CD4-positive, alpha-beta memory T cell (primary cell): ENCODE measurements at regions of chr7 and their contacts with region 1.

Region 1: GRCh38 chr7:50782384-50783208 is at the start of gene GRB10:
- DNase-seq: peak in 1 of 5 donors; percentile 23
- H3K4me3 ChIP-seq: no peak within 1 kb of the TSS
- H3K4me3 Mint-ChIP-seq: peak within 1 kb of the TSS; percentile 74 to 86 (median 80)
- H3K27ac ChIP-seq: no peak within 1 kb of the TSS
- H3K27ac Mint-ChIP-seq: peak within 1 kb of the TSS in 6 of 7 donors; percentile 5 to 88 (median 60)
- H3K4me1 ChIP-seq: peaks cover 7% of the 10 kb centered on the region
- H3K4me1 Mint-ChIP-seq: peaks cover 16 to 28% (median 24%) of the 10 kb centered on the region in 4 donors
- H3K27me3 ChIP-seq: peaks cover 3% of the 10 kb centered on the region
- H3K27me3 Mint-ChIP-seq: peaks cover 15 to 22% of the 10 kb centered on the region in 2 donors
- total RNA-seq, gene GRB10: 7.4 to 7.7 TPM

Region 2: GRCh38 chr7:50739744-50740435 is 42.7 kb before region 1 on chr7:
- CTCF ChIA-PET with region 1: no interaction called
- POLR2A ChIA-PET with region 1: no interaction called
- intact Hi-C with region 1: loop called (anchors 1 kb)
- DNase-seq: peak; percentile 85 to 93 (median 91)
- H3K4me3 ChIP-seq: peak overlapping the region in 1 of 2 donors; percentile 8
- H3K4me3 Mint-ChIP-seq: peak overlapping the region; percentile 65 to 83 (median 78)
- H3K27ac ChIP-seq: peak overlapping the region; percentile 67
- H3K27ac Mint-ChIP-seq: peak overlapping the region; percentile 88 to 99 (median 98)
- H3K4me1 ChIP-seq: peaks cover 21% of the 10 kb centered on the region
- H3K4me1 Mint-ChIP-seq: peaks cover 23 to 34% (median 28%) of the 10 kb centered on the region in 4 donors
- H3K27me3 ChIP-seq: no peaks in the 10 kb centered on the region
- H3K27me3 Mint-ChIP-seq: no peaks in the 10 kb centered on the region

Region 3: DNA sequence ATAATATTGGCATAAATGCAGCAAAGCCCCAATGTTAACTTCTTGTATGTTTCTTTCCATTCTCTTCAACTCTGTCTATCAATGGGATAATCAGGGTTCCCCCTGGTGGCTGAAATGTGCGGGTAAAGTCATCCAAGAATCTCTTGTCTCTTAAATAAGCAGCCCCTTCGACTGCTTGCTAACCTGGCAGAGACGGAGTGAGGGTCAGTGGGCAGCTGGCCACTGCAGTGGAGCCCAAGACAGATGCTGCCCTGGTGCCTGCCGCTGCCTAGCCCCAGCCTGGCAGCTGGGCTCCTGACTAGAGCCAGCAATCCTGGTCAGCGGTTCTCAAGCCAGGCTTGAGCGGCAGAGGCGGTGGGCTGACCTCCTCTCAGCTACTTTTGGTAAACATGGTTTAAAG is 285.2 kb after region 1 on chr7:
- CTCF ChIA-PET with region 1: no interaction called
- POLR2A ChIA-PET with region 1: no interaction called
- intact Hi-C with region 1: loop called (anchors 5 kb)
- DNase-seq: peak; percentile 19 to 41 (median 28)
- H3K4me3 ChIP-seq: no peak overlapping the region
- H3K4me3 Mint-ChIP-seq: no peak overlapping the region
- H3K27ac ChIP-seq: no peak overlapping the region
- H3K27ac Mint-ChIP-seq: no peak overlapping the region
- H3K4me1 ChIP-seq: no peaks in the 10 kb centered on the region
- H3K4me1 Mint-ChIP-seq: peaks cover 0 to 5% (median under 1%) of the 10 kb centered on the region in 4 donors
- H3K27me3 ChIP-seq: no peaks in the 10 kb centered on the region
- H3K27me3 Mint-ChIP-seq: peaks cover 1 to 2% of the 10 kb centered on the region in 2 donors